CD4-positive, alpha-beta T cell (primary cell): ENCODE measurements at regions of chrX and their contacts with region 1.

Region 1: DNA sequence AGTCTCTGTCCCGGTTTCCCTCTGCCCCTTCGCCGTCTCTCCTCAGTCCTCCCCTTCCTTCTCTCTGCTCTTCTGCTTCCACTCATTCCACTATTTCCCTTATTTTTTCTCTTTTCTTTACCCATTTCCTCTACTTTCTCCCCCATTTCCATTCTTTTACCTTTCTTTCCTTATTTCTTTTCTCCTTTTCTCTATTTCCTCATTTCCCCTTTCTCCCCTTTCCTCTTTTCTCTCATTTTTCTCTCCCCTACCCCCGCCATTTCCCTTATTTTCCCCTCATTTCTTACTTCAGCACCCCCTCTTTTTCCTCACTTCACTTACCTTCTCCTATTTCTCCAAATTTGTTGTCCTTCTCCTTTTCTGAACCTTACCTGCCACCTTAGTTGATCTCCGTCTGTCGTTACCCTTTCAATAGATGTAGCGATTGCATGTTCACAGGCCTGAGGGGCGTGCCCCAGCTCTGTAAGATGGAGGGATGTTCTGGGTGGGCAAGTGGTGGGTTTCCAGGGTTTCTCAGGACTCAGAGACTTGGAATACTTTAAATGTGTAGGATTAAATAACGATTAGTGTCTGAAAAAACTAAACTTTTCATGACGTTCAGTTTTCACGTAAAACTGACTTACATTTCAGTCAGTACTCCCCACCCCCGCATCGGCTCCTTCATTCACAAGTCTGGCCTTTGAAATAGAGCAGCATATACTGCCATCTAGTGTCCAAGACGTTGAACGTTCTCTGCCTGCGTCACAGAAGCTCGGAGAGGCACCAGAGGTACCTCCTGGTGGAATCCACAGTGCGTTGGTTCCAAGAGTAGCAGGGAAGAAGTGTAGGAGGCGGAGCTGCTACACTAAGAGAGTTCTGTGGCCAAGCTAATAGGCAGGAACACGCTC is 641 bp upstream of the NCBP2L start:
- DNase-seq: peak; percentile 50 to 90 (median 66)
- ATAC-seq: peak; percentile 69
- H3K4me3 ChIP-seq: peak overlapping the region; percentile 72
- H3K4me3 Mint-ChIP-seq: peak overlapping the region; percentile 87
- H3K27ac ChIP-seq: peak overlapping the region in 1 of 2 donors; percentile 60
- H3K27ac Mint-ChIP-seq: peak overlapping the region; percentile 80
- H3K4me1 ChIP-seq: peaks cover 20% of the 10 kb centered on the region
- H3K4me1 Mint-ChIP-seq: peaks cover 23% of the 10 kb centered on the region
- H3K27me3 ChIP-seq: no peaks in the 10 kb centered on the region
- H3K27me3 Mint-ChIP-seq: no peaks in the 10 kb centered on the region
- CTCF ChIP-seq: peak; percentile 47

Region 2: GRCh38 chrX:106999002-106999975 is 777.6 kb before region 1 on chrX:
- CTCF ChIA-PET with region 1: no interaction called
- POLR2A ChIA-PET with region 1: interaction called, 10 read pairs
- intact Hi-C with region 1: loop called (anchors 1 to 5 kb)
- DNase-seq: peak; percentile 5 to 69 (median 36)
- ATAC-seq: peak; percentile 74
- H3K4me3 ChIP-seq: peak overlapping the region; percentile 62
- H3K4me3 Mint-ChIP-seq: peak overlapping the region; percentile 88
- H3K27ac ChIP-seq: no peak overlapping the region
- H3K27ac Mint-ChIP-seq: peak overlapping the region; percentile 73
- H3K4me1 ChIP-seq: peaks cover 8% of the 10 kb centered on the region
- H3K4me1 Mint-ChIP-seq: peaks cover 13% of the 10 kb centered on the region
- H3K27me3 ChIP-seq: no peaks in the 10 kb centered on the region
- H3K27me3 Mint-ChIP-seq: no peaks in the 10 kb centered on the region
- CTCF ChIP-seq: peak; percentile 49

Region 3: DNA sequence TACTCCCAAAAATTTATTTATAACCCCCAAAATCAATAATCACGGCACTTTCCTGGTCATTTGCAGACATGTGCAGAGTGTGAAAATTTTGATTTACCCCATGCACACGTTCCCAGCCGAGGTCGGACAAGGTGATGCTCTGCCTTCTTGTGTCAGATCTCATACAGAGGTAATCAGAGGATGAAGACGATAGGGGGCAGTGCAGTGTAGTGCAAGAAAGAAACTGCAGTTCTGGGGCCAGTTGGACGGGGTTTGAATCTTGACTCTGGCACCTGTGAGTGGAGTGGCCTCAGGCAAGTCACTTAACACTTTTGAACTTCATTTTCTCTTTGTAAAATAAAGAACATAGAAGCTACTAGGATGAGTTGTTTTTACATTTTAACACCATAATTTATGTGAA is 239.1 kb before region 1 on chrX:
- CTCF ChIA-PET with region 1: no interaction called
- POLR2A ChIA-PET with region 1: interaction called, 4 read pairs
- intact Hi-C with region 1: loop called in 1 of 2 experiments (anchors 5 kb)
- DNase-seq: peak in 11 of 14 experiments; percentile 0 to 59 (median 9)
- ATAC-seq: peak; percentile 54
- H3K4me3 ChIP-seq: no peak overlapping the region
- H3K4me3 Mint-ChIP-seq: no peak overlapping the region
- H3K27ac ChIP-seq: no peak overlapping the region
- H3K27ac Mint-ChIP-seq: no peak overlapping the region
- H3K4me1 ChIP-seq: no peaks in the 10 kb centered on the region
- H3K4me1 Mint-ChIP-seq: no peaks in the 10 kb centered on the region
- H3K27me3 ChIP-seq: no peaks in the 10 kb centered on the region
- H3K27me3 Mint-ChIP-seq: peaks cover 16% of the 10 kb centered on the region
- CTCF ChIP-seq: no peak

Region 4: GRCh38 chrX:107654872-107655761 is 121.8 kb before region 1 on chrX:
- CTCF ChIA-PET with region 1: interaction called, 92 read pairs
- POLR2A ChIA-PET with region 1: interaction called, 23 read pairs
- intact Hi-C with region 1: loop called (anchors 1 kb)
- DNase-seq: peak; percentile 49 to 81 (median 64)
- ATAC-seq: peak; percentile 92
- H3K4me3 ChIP-seq: no peak overlapping the region
- H3K4me3 Mint-ChIP-seq: no peak overlapping the region
- H3K27ac ChIP-seq: no peak overlapping the region
- H3K27ac Mint-ChIP-seq: peak overlapping the region; percentile 13
- H3K4me1 ChIP-seq: peaks cover 12% of the 10 kb centered on the region
- H3K4me1 Mint-ChIP-seq: peaks cover 29% of the 10 kb centered on the region
- H3K27me3 ChIP-seq: no peaks in the 10 kb centered on the region
- H3K27me3 Mint-ChIP-seq: no peaks in the 10 kb centered on the region
- CTCF ChIP-seq: peak; percentile 72

Region 5: DNA sequence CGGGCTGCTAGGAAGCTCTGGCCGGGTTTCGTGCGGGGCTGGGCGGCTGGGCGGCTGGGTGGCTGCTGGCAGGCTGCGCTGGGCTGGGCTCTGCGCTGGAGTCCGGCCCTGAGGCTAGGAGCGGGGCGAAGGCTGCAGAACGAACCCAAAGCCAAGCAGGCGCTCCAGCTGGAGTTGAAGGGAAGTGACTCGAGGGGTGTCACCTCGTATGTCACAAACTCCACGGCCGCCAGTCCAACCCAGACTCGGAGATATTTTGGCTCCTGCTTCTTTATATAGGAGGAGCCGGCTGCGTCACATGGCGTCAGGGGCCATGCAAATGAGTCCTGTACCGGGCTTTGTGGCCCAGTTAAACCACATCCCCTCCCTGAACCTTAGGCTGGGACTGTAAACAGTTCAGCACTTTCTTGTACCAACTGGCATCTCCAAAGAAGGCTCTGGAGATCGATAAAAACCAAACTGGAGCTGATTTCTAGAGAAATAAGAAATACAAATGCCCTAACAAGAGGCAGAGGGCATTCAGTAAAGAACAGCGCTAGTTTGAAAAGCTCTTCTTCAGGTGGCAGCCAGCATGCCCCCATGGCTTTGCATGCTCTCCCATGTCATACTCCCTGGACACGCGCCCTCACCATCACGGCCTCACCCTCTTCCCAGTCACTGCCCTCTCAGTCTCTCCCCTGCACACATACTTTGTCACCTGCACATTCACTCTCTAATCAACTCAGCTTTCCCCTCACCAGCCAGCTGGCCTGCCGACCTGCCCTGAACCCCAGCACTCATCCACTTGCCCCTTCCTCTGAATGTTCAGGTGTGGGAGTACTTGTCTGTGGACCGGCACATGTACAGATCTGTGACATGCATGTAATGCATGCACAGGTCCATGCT is 59.8 kb before region 1 on chrX:
- CTCF ChIA-PET with region 1: interaction called, 31 read pairs
- POLR2A ChIA-PET with region 1: interaction called, 68 read pairs
- intact Hi-C with region 1: loop called (anchors 1 to 2 kb)
- DNase-seq: peak; percentile 83 to 96 (median 87)
- ATAC-seq: peak; percentile 54
- H3K4me3 ChIP-seq: peak overlapping the region; percentile 98
- H3K4me3 Mint-ChIP-seq: peak overlapping the region; percentile 97
- H3K27ac ChIP-seq: peak overlapping the region; percentile 91 to 99
- H3K27ac Mint-ChIP-seq: peak overlapping the region; percentile 99
- H3K4me1 ChIP-seq: peaks cover 52% of the 10 kb centered on the region
- H3K4me1 Mint-ChIP-seq: peaks cover 50% of the 10 kb centered on the region
- H3K27me3 ChIP-seq: no peaks in the 10 kb centered on the region
- H3K27me3 Mint-ChIP-seq: peaks cover 4% of the 10 kb centered on the region
- CTCF ChIP-seq: no peak

Region 6: GRCh38 chrX:107805179-107805578 is 28.3 kb after region 1 on chrX:
- CTCF ChIA-PET with region 1: no interaction called
- POLR2A ChIA-PET with region 1: no interaction called
- intact Hi-C with region 1: no loop called
- DNase-seq: no peak
- ATAC-seq: no peak
- H3K4me3 ChIP-seq: no peak overlapping the region
- H3K4me3 Mint-ChIP-seq: no peak overlapping the region
- H3K27ac ChIP-seq: no peak overlapping the region
- H3K27ac Mint-ChIP-seq: no peak overlapping the region
- H3K4me1 ChIP-seq: no peaks in the 10 kb centered on the region
- H3K4me1 Mint-ChIP-seq: no peaks in the 10 kb centered on the region
- H3K27me3 ChIP-seq: no peaks in the 10 kb centered on the region
- H3K27me3 Mint-ChIP-seq: peaks cover 14% of the 10 kb centered on the region
- CTCF ChIP-seq: no peak

Region 7: DNA sequence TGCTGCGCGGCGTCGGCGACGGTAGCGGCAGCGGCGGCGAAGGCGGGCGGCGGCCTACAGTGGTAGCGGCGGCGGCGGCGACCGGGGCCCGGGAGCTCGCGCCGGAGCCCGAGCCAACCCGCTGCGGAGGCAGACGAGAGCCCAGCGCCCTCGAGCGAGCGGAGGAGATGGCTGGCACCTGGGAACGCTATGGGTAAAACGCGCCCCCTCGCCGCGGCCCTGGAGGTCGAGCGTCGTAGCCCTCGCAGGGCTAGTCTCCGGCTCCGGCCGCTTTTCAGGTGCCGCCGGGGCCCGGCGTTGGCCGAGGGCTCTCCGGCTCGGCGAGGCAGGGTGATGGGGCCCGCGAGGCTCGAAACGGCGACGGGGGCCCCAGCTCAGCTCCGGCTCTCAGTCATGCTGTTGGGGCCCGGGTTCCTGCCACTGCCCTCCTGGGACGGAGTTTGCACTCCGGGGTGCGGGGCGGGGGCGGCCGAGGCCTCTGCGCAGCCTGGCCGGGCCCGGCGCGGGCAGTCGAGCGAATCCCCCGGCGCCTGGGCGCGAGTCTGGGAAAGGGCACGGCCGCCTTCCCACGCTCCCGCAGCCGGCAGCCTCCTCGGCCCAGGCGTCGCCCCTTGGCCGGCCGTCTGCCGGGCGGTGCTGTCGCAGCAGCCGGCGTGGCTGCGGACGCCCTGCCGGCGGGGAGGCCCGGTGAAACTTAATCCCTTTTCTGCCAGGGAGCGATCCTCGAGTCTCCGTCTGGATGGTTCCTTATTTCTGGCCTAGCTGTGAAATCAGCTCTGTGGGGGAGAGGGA is 49.5 kb after region 1 on chrX:
- CTCF ChIA-PET with region 1: no interaction called
- POLR2A ChIA-PET with region 1: interaction called, 3 read pairs
- intact Hi-C with region 1: loop called in 1 of 2 experiments (anchors 5 kb)
- DNase-seq: peak in 13 of 14 experiments; percentile 1 to 72 (median 33)
- ATAC-seq: peak; percentile 49
- H3K4me3 ChIP-seq: peak overlapping the region; percentile 62
- H3K4me3 Mint-ChIP-seq: peak overlapping the region; percentile 93
- H3K27ac ChIP-seq: peak overlapping the region in 1 of 2 donors; percentile 50
- H3K27ac Mint-ChIP-seq: peak overlapping the region; percentile 90
- H3K4me1 ChIP-seq: peaks cover 20% of the 10 kb centered on the region
- H3K4me1 Mint-ChIP-seq: peaks cover 58% of the 10 kb centered on the region
- H3K27me3 ChIP-seq: no peaks in the 10 kb centered on the region
- H3K27me3 Mint-ChIP-seq: peaks cover 5% of the 10 kb centered on the region
- CTCF ChIP-seq: no peak